MCF 10A (cell line): ENCODE measurements at regions of chr3 and their contacts with region 1.

Region 1: GRCh38 chr3:107429320-107430181 is 52.3 kb downstream of the CCDC54 start:
- DNase-seq: peak; percentile 82
- H3K4me3 Mint-ChIP-seq: peak overlapping the region; percentile 79
- H3K27ac Mint-ChIP-seq: no peak overlapping the region
- H3K4me1 Mint-ChIP-seq: peaks cover 7% of the 10 kb centered on the region
- H3K27me3 Mint-ChIP-seq: no peaks in the 10 kb centered on the region
- CTCF ChIP-seq: peak; percentile 79

Region 2: DNA sequence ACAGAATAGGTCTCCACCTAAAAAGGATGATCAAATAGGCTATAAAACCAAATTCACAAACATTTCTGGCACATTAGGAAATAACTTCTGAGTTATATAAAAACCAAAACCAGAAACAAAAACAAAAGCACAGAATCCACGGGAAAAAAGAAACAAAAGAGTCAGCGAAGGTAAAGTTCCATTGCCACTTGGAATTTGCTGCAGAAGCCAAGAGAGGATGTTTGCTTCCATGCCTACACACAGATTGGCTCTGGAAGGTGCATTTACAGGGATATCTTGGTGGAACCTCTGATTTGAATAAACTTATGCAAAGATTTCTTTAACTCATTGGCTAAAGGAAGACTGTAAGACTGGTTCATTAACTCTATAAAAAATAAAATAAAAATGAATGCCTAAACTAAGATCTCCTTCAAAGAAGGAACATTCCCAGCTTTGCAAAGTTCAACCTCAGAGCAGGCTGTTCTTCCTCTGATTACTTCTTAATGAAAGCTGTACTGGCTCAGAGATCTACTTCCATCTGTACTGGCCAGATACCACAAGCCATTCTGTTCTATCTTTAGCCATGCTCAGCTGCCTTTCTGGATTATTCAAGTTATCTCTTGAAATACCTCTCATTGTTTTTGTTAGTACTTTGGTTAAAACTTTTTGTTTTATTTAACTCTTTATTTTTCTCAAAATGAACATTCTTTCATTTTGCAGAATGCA is 589.8 kb before region 1 on chr3:
- CTCF ChIA-PET with region 1: no interaction called
- POLR2A ChIA-PET with region 1: no interaction called
- intact Hi-C with region 1: no loop called
- DNase-seq: no peak
- H3K4me3 Mint-ChIP-seq: no peak overlapping the region
- H3K27ac Mint-ChIP-seq: no peak overlapping the region
- H3K4me1 Mint-ChIP-seq: no peaks in the 10 kb centered on the region
- H3K27me3 Mint-ChIP-seq: no peaks in the 10 kb centered on the region
- CTCF ChIP-seq: no peak

Region 3: DNA sequence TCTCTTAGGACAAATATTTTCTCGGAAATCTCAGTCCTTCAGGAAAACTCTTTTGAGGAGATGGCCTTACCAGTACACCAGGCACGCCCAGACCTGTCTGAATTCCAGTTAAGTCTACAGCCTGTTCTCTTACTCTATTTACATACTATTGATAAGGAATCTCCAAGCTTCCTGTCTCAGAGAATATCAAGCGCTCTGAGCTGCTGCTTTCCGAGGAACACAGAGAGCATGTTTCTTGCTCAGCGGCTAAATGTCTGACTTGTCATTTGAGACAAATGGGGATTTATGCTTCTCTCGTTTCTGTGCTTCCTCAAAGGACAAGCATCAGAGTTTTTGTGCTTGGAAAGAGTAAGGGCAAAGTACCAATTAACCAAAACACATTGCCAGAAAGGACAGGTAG is 164.7 kb before region 1 on chr3:
- CTCF ChIA-PET with region 1: interaction called, 16 read pairs
- POLR2A ChIA-PET with region 1: interaction called, 5 read pairs
- intact Hi-C with region 1: no loop called
- DNase-seq: peak; percentile 52
- H3K4me3 Mint-ChIP-seq: peak overlapping the region; percentile 28
- H3K27ac Mint-ChIP-seq: peak overlapping the region; percentile 88
- H3K4me1 Mint-ChIP-seq: peaks cover 14% of the 10 kb centered on the region
- H3K27me3 Mint-ChIP-seq: no peaks in the 10 kb centered on the region
- CTCF ChIP-seq: no peak

Region 4: GRCh38 chr3:107284612-107285011 is 144.9 kb before region 1 on chr3:
- CTCF ChIA-PET with region 1: interaction called, 15 read pairs
- POLR2A ChIA-PET with region 1: interaction called, 18 read pairs
- intact Hi-C with region 1: no loop called
- DNase-seq: peak; percentile 39
- H3K4me3 Mint-ChIP-seq: no peak overlapping the region
- H3K27ac Mint-ChIP-seq: peak overlapping the region; percentile 96
- H3K4me1 Mint-ChIP-seq: peaks cover 22% of the 10 kb centered on the region
- H3K27me3 Mint-ChIP-seq: no peaks in the 10 kb centered on the region
- CTCF ChIP-seq: no peak

Region 5: DNA sequence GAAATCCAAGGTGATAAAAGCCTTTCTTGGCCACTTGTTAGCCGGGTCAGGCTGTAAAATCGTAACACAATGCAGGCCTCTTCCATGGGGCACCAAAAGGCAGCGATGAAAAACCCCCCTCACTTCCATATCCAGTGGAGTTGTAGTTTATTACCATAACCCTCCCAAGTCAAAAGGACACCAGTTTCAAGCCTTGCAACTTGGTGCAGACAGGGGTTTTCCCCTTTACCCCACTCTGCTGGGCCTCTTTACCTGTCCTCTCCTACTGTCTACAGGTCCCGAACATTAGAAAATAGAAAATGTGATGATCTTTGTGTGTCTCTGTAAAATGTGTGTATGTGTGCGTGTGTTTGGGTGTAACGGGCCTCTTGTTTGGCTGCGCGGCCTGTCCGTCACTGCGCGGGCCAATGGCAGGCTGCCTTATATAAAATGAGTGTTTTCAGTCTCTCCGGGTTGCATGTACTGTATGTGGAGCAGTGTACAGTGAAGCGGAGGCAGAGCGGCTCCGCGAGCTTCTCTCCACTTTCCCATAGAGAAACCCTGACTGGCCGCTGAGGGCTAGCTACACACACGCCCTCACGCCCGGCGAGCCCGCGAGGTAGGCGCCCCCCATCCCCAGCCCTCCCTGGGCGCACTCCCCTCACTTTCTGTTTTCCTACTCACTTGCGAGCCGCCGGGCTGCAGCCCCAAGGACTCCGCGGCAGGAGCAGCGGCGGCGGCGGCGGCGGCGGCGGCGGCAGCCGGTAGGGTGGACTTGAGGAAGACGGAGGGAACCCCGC is 93.1 kb after region 1 on chr3 and contains the start of gene BBX:
- CTCF ChIA-PET with region 1: interaction called, 6 read pairs
- POLR2A ChIA-PET with region 1: interaction called, 24 read pairs
- intact Hi-C with region 1: loop called (anchors 1 kb)
- DNase-seq: peak; percentile 93
- H3K4me3 Mint-ChIP-seq: peak within 1 kb of the TSS; percentile 85
- H3K27ac Mint-ChIP-seq: peak within 1 kb of the TSS; percentile 93
- H3K4me1 Mint-ChIP-seq: peaks cover 14% of the 10 kb centered on the region
- H3K27me3 Mint-ChIP-seq: no peaks in the 10 kb centered on the region
- CTCF ChIP-seq: no peak
- total RNA-seq, gene BBX: 73.2 and 77.2 TPM in 2 replicates